ENCODE measurements at regions of chr5 and their contacts with region 1.

Region 1: GRCh38 chr5:158174918-158175851 is 316.2 kb upstream of the CLINT1 start:
- ATAC-seq: peak; percentile 85 to 96 (median 90)
- H3K4me3 ChIP-seq: no peak overlapping the region
- H3K27ac ChIP-seq: no peak overlapping the region
- H3K4me1 ChIP-seq: peaks cover 9 to 18% of the 10 kb centered on the region in 2 donors

Region 2: GRCh38 chr5:157677931-157678330 is 497.3 kb before region 1 on chr5:
- in situ Hi-C with region 1: no loop called
- ATAC-seq: no peak
- H3K4me3 ChIP-seq: no peak overlapping the region
- H3K27ac ChIP-seq: no peak overlapping the region
- H3K4me1 ChIP-seq: no peaks in the 10 kb centered on the region

Region 3: DNA sequence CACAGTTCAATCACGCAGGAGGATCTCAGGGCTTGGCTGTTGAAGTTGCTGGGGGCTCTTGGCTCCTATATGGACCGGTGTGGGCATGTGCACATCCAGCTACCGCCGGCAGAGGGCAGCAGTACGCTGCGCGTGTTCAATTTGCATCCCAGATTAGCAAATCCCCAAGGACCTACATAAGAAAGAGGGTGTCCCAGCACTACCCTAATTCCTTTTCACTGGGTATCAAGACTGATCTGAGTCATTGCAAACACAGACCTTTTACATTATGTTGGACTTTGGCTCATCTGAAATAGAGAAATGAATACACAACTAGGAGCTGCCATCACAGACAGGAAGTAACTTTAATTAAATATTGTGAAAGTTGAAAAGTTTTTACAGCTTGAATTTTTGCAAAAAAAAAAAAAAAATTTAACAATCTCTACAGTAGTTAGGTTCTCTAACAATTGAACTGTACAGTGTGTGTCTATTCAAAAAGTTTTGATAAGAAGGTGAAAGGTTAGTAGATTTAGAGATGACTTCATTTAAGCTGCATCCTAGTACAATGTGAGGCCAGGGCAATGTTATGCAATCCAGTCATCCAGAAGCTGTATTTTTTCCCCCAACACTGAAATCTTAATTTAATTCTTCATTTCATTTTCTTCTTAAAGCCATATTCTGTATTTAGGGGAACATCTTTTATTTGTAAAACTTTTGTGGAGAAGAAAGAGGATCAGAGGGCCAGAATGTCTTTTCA is 520.6 kb after region 1 on chr5:
- in situ Hi-C with region 1: loop called in 3 of 9 experiments (anchors 25 kb)
- ATAC-seq: peak; percentile 75 to 94 (median 82)
- H3K4me3 ChIP-seq: no peak overlapping the region
- H3K27ac ChIP-seq: no peak overlapping the region
- H3K4me1 ChIP-seq: peaks cover 9 to 26% of the 10 kb centered on the region in 2 donors

Region 4: GRCh38 chr5:158701406-158702177 is 526.4 kb after region 1 on chr5:
- in situ Hi-C with region 1: loop called in 3 of 9 experiments (anchors 25 kb)
- ATAC-seq: no peak
- H3K4me3 ChIP-seq: no peak overlapping the region
- H3K27ac ChIP-seq: no peak overlapping the region
- H3K4me1 ChIP-seq: peaks cover 6 to 12% of the 10 kb centered on the region in 2 donors

Region 5: GRCh38 chr5:159112436-159112835 is 937.3 kb after region 1 on chr5:
- in situ Hi-C with region 1: loop called in 6 of 9 experiments (anchors 10 to 25 kb)
- ATAC-seq: no peak
- H3K4me3 ChIP-seq: no peak overlapping the region
- H3K27ac ChIP-seq: no peak overlapping the region
- H3K4me1 ChIP-seq: no peaks in the 10 kb centered on the region

Region 6: DNA sequence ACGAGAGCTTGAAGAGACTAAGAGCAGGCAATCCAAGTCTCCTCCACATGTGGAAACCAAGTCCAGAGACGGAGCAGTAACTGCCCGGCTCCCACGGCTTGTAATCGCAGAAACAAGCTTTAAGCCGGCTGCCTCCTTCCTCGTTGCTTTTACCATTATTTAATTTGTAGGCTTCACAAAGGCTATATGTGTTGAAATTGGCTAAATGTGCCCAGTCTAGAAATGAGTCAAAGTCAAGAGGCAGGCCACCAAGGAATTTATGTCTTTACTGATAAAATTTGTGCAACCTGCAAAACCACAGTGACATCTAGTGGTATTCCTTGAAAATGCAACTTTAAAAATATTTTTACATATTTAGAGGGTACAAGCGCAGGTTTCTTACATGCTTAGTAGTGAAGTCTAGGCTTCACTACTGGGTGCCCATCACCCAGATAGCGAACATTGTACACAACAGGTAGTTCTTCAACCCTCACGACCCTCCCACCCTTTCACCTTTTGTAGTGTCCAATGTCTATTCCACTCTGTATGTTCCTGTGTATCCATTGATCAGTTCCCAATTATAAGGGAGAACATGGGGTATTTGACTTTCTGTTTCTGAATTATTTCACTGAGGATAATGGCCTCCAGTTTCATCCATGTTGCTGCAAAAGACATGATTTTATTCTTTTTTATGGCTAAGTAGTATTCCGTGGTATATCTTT is 958.0 kb after region 1 on chr5:
- in situ Hi-C with region 1: loop called in 1 of 9 experiments (anchors 25 kb)
- ATAC-seq: peak; percentile 26 to 74 (median 52)
- H3K4me3 ChIP-seq: no peak overlapping the region
- H3K27ac ChIP-seq: no peak overlapping the region
- H3K4me1 ChIP-seq: peaks cover 0 to 16% of the 10 kb centered on the region in 2 donors

Measured in motor neuron (in vitro differentiated cells).